ENCODE measurements at regions of chr15 and their contacts with region 1.

Region 1: GRCh38 chr15:27135151-27135550 is 164.2 kb downstream of the GABRG3 start:
- DNase-seq: no peak
- ATAC-seq: no peak
- H3K4me3 ChIP-seq: no peak overlapping the region
- H3K27ac ChIP-seq: no peak overlapping the region
- H3K4me1 ChIP-seq: no peaks in the 10 kb centered on the region
- H3K27me3 ChIP-seq: peaks cover 0 to 8% (median 0%) of the 10 kb centered on the region in 7 donors
- CTCF ChIP-seq: no peak

Region 2: DNA sequence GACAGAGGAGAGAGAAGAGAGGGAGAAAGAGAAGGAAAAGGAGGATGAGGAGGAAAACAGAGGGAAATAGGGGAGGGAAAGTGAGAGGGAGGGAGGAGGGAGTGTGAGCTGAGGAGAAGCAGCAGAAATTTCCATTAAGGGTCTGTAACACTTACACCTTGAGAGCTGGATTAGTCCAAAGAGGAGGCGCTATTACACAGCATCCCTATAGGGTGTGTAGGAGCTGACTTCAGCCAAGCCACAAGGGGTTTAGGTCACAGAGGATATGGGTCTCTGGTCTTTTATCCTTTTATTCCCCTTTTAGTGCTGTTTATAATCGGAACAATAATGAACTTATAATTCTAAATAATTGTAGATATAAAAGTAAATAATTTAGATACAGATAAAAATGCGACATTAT is 66.3 kb after region 1 on chr15:
- intact Hi-C with region 1: loop called in 1 of 10 experiments (anchors 10 kb)
- DNase-seq: no peak
- ATAC-seq: no peak
- H3K4me3 ChIP-seq: no peak overlapping the region
- H3K27ac ChIP-seq: no peak overlapping the region
- H3K4me1 ChIP-seq: no peaks in the 10 kb centered on the region
- H3K27me3 ChIP-seq: no peaks in the 10 kb centered on the region
- CTCF ChIP-seq: no peak

Region 3: DNA sequence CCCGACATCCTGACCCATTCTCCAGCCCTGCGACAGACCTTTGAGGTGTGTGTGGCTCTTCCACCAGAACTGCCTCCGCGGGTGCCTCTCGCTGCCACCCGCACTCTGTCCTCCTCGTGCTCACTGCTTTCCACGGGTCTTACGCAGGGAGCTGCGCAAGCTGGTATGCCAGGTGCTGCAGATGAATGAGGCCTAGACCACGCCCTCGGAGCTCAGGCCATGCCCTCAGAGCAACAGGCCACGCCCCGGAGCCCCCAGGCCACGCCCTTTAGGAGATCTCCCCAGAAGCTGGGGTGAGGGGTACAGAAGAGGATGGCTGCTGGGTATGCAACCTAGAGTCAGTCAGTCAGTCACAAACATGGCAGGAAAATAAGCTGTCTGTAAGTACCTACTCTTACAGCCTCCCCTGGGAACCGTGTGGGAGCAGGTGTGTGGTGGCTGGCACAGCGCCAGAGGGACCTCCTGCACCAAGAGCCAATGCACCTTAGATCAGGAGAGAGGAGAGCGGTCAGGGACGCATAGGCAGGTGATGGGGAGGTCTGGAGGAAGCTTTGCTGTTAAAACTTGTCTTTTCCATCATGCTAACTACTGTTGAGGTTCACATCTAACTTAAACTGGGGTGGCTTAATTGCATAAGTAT is 136.2 kb after region 1 on chr15:
- intact Hi-C with region 1: no loop called
- DNase-seq: no peak
- ATAC-seq: no peak
- H3K4me3 ChIP-seq: no peak overlapping the region
- H3K27ac ChIP-seq: no peak overlapping the region
- H3K4me1 ChIP-seq: no peaks in the 10 kb centered on the region
- H3K27me3 ChIP-seq: peaks cover 0 to 4% (median 0%) of the 10 kb centered on the region in 7 donors
- CTCF ChIP-seq: no peak

Measured in heart right ventricle (tissue), 16 donors.